Activated T-helper 1 cell treated with anti-CD3 and anti-CD28 coated beads, Interleukin-12 subunit alpha, Interleukin-12 subunit beta, Interleukin-2, Interleukin-4 antibody, amounts not matched to agents 30 ng/mL and 10 ng/mL and 1 ng/mL, durations not matched to agents 14 hours and 24 hours and 36 hours (primary cell): ENCODE measurements at regions of chr10 and their contacts with region 1.

Region 1: GRCh38 chr10:122953827-122954730 is at the start of gene C10orf88:
- DNase-seq: peak; percentile 97
- H3K4me3 Mint-ChIP-seq: peak within 1 kb of the TSS; percentile 87
- H3K27ac Mint-ChIP-seq: peak within 1 kb of the TSS; percentile 88
- H3K4me1 Mint-ChIP-seq: peaks cover 47% of the 10 kb centered on the region
- H3K27me3 Mint-ChIP-seq: peaks cover 15% of the 10 kb centered on the region
- total RNA-seq, gene C10orf88: 11.8 and 14.1 TPM in 2 replicates

Region 2: GRCh38 chr10:122911889-122912484 is 42.1 kb before region 1 on chr10:
- intact Hi-C with region 1: loop called (anchors 1 kb)
- DNase-seq: peak; percentile 46
- H3K4me3 Mint-ChIP-seq: no peak overlapping the region
- H3K27ac Mint-ChIP-seq: no peak overlapping the region
- H3K4me1 Mint-ChIP-seq: no peaks in the 10 kb centered on the region
- H3K27me3 Mint-ChIP-seq: peaks cover 5% of the 10 kb centered on the region

Region 3: DNA sequence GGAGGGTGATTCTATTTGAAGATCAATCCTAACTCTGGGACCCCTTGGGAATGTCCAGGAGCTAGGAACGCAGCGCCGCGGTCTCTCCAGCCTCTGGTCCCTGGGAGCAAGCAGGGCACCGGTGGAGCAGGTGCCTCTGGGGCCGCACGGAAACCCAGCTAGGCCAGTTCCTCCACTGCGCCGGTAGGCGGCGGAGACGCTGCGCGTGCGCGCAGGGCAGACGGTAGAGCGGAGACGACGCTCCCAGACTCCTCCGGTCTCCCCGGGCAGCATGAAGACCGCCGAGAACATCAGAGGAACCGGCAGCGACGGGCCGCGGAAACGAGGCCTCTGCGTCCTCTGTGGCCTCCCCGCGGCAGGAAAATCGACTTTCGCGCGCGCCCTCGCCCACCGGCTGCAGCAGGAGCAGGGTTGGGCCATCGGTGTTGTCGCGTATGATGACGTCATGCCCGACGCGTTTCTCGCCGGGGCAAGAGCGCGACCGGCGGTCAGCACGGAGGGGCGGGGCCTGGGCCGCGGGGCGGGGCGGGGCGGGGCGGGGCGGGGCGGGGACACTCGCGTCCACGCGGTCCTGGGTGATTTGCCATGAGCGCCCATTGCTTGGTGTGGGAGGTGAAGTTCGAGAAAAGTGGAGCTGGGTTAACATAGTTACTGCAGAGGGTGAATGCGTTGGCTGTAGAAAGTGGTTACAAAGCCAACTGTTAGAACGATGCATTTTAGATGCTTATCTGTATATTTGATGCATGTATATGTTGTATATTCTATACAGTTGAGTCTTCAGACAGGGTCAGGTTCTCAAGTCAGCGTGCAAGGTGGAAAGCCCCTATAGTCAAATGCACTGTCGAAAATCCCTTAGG is 26.4 kb after region 1 on chr10 and contains the start of gene PSTK:
- intact Hi-C with region 1: loop called (anchors 1 kb)
- DNase-seq: peak; percentile 83
- H3K4me3 Mint-ChIP-seq: peak within 1 kb of the TSS; percentile 87
- H3K27ac Mint-ChIP-seq: peak within 1 kb of the TSS; percentile 97
- H3K4me1 Mint-ChIP-seq: peaks cover 22% of the 10 kb centered on the region
- H3K27me3 Mint-ChIP-seq: peaks cover 12% of the 10 kb centered on the region
- total RNA-seq, gene PSTK: 4.5 and 4.8 TPM in 2 replicates